ENCODE measurements at regions of chr6 and their contacts with region 1.

Region 1: DNA sequence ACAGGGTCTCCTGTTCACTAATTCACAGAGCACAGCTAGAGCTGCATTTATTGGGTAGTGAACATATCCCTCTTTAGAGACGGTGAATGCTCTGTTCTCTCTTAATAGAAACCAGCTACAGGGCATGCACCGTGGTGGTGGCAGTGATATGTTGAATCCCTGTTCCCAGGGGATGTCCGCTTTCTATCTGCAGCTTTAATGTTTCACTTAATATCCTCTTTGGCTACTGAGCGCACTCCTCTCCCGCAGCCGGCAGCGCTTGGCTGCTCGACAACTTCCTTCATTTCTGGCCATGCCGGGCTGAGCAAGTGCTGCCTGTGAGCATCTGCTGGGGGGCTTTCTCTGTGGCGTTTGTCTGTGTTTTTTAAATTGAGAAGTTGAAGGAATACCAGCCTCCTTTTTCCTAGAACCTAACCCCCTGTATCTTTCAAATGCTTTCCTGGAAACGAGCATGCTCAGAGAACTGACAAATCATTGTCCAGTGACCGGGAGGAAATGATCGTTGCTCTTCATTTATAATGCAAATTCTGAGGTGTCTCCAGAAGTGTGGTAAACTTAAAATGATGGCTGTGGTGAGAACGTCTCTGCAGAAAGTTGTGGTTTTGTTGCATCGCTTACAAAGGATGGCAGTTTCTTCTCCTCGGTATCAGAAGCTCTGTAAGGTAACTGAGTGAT is 297.9 kb downstream of the UTRN start:
- DNase-seq: peak; percentile 83
- ATAC-seq: peak; percentile 90
- H3K4me3 ChIP-seq: peak overlapping the region; percentile 16; the same call in 1 of the 2 replicates
- H3K27ac ChIP-seq: no peak overlapping the region
- H3K4me1 ChIP-seq: peaks cover 21% of the 10 kb centered on the region; the same call in 1 of the 2 replicates
- H3K27me3 ChIP-seq: no peaks in the 10 kb centered on the region
- CTCF ChIP-seq: no peak
- EP300 ChIP-seq: peak in 1 of 2 experiments; percentile 63; a peak in 1 of 4 replicates
- POLR2A ChIP-seq: no peak
- RAD21 ChIP-seq: no peak

Region 2: DNA sequence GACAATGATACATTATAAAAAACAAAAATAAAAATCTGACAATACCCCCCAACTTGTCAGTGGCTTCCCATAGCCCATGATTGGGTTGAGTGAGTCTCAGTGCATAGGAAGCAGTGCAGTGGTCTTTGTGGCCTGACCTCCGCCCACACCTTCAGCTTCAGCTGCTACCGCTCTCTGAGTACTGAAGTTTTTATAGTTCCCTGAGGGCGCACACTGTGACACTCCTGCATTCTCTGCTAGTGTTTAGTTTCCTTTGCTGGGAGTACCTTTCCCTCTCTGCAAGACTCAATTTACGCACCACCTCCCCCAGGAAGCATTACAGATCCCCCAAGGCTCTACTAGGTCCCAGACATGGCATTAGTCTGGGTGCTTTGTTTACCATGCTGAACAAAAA is 143.1 kb after region 1 on chr6:
- CTCF ChIA-PET with region 1: interaction called, 4 read pairs
- POLR2A ChIA-PET with region 1: no interaction called
- RAD21 ChIA-PET with region 1: interaction called, 5 read pairs
- SMC1A ChIA-PET with region 1: no interaction called
- in situ Hi-C with region 1: no loop called
- intact Hi-C with region 1: loop called (anchors 10 kb)
- DNase-seq: no peak
- ATAC-seq: peak; percentile 77
- H3K4me3 ChIP-seq: no peak overlapping the region
- H3K27ac ChIP-seq: no peak overlapping the region
- H3K4me1 ChIP-seq: peaks cover 20% of the 10 kb centered on the region; the same call in 1 of the 2 replicates
- H3K27me3 ChIP-seq: no peaks in the 10 kb centered on the region
- CTCF ChIP-seq: no peak
- EP300 ChIP-seq: peak in 1 of 2 experiments; percentile 19; a peak in 1 of 4 replicates
- POLR2A ChIP-seq: no peak
- RAD21 ChIP-seq: no peak

Region 3: DNA sequence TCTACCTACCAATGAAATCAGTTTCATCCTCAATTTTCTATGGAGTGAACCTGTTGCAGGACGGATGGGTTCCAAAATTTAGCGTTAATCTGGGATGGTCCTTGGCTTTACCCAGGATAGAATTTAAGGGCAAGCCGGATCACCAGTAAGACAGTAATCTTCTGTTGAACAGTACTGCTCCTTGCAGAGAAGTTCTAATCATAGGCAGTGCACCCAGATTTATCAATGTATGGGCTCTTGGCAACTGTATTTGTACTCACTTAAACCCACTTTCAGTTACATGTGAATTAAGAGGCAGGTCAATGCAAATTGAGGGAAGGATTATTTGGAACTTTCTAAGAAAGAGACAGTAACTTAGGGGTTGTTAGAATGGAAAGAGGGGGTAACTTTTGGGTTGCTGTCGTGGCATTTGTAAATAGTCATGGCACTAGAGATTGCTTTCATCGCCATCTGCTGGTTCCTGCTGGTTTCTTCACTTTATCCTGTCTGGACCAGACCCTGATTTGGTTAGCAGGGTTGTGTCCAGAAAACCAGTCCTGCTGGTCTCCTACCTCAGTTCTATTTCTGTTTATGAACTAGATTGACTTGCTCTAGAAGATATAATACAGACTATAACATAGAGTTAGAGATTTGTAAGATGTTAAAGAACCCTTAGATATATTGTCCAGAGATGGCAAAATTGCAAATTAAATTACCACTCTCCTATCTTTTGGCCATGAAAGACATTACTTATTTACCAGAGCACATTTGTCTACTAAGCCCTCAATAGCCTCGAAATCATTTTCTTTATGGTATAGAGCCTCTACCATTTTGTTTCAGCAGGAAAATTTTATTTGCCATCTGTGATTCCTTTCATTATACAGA is 348.3 kb after region 1 on chr6:
- CTCF ChIA-PET with region 1: interaction called, 5 read pairs
- POLR2A ChIA-PET with region 1: no interaction called
- RAD21 ChIA-PET with region 1: interaction called, 3 read pairs
- SMC1A ChIA-PET with region 1: interaction called, 7 read pairs
- in situ Hi-C with region 1: loop called (anchors 5 kb)
- intact Hi-C with region 1: loop called (anchors 1 kb)
- DNase-seq: no peak
- ATAC-seq: peak; percentile 78
- H3K4me3 ChIP-seq: no peak overlapping the region
- H3K27ac ChIP-seq: no peak overlapping the region
- H3K4me1 ChIP-seq: no peaks in the 10 kb centered on the region
- H3K27me3 ChIP-seq: no peaks in the 10 kb centered on the region; a peak in 1 of 4 replicates
- CTCF ChIP-seq: peak; percentile 49 to 57 (median 53); a peak in 5 of 6 replicates
- EP300 ChIP-seq: no peak
- POLR2A ChIP-seq: no peak
- RAD21 ChIP-seq: peak; percentile 56

Region 4: GRCh38 chr6:145028144-145028818 is 445.2 kb after region 1 on chr6:
- CTCF ChIA-PET with region 1: interaction called, 7 read pairs
- POLR2A ChIA-PET with region 1: no interaction called
- RAD21 ChIA-PET with region 1: interaction called, 3 read pairs
- SMC1A ChIA-PET with region 1: interaction called, 4 read pairs
- in situ Hi-C with region 1: loop called (anchors 10 kb)
- intact Hi-C with region 1: loop called (anchors 1 kb)
- DNase-seq: no peak
- ATAC-seq: peak; percentile 84
- H3K4me3 ChIP-seq: no peak overlapping the region
- H3K27ac ChIP-seq: no peak overlapping the region
- H3K4me1 ChIP-seq: no peaks in the 10 kb centered on the region
- H3K27me3 ChIP-seq: no peaks in the 10 kb centered on the region; a peak in 1 of 4 replicates
- CTCF ChIP-seq: peak; percentile 35 to 59 (median 54); a peak in 4 of 6 replicates
- EP300 ChIP-seq: no peak
- POLR2A ChIP-seq: no peak
- RAD21 ChIP-seq: peak; percentile 60

Region 5: GRCh38 chr6:145086197-145086596 is 503.1 kb after region 1 on chr6:
- CTCF ChIA-PET with region 1: no interaction called
- POLR2A ChIA-PET with region 1: no interaction called
- RAD21 ChIA-PET with region 1: no interaction called
- SMC1A ChIA-PET with region 1: no interaction called
- in situ Hi-C with region 1: no loop called
- intact Hi-C with region 1: no loop called
- DNase-seq: no peak
- ATAC-seq: peak; percentile 34; the same call in 2 of the 3 replicates
- H3K4me3 ChIP-seq: no peak overlapping the region
- H3K27ac ChIP-seq: no peak overlapping the region
- H3K4me1 ChIP-seq: no peaks in the 10 kb centered on the region
- H3K27me3 ChIP-seq: no peaks in the 10 kb centered on the region
- CTCF ChIP-seq: no peak
- EP300 ChIP-seq: no peak
- POLR2A ChIP-seq: no peak
- RAD21 ChIP-seq: no peak

Region 6: GRCh38 chr6:145214570-145214969 is 631.5 kb after region 1 on chr6:
- CTCF ChIA-PET with region 1: interaction called, 8 read pairs
- POLR2A ChIA-PET with region 1: no interaction called
- RAD21 ChIA-PET with region 1: interaction called, 3 read pairs
- SMC1A ChIA-PET with region 1: interaction called, 3 read pairs
- in situ Hi-C with region 1: loop called (anchors 5 kb)
- intact Hi-C with region 1: loop called (anchors 2 kb)
- DNase-seq: no peak
- ATAC-seq: peak; percentile 55
- H3K4me3 ChIP-seq: no peak overlapping the region
- H3K27ac ChIP-seq: no peak overlapping the region
- H3K4me1 ChIP-seq: peaks cover 15% of the 10 kb centered on the region
- H3K27me3 ChIP-seq: no peaks in the 10 kb centered on the region
- CTCF ChIP-seq: peak; percentile 32 to 43 (median 37); a peak in 4 of 6 replicates
- EP300 ChIP-seq: no peak
- POLR2A ChIP-seq: no peak
- RAD21 ChIP-seq: peak; percentile 72

Region 7: GRCh38 chr6:145704143-145704781 is 1121.2 kb after region 1 on chr6:
- CTCF ChIA-PET with region 1: no interaction called
- POLR2A ChIA-PET with region 1: no interaction called
- RAD21 ChIA-PET with region 1: no interaction called
- SMC1A ChIA-PET with region 1: no interaction called
- in situ Hi-C with region 1: no loop called
- intact Hi-C with region 1: loop called (anchors 10 kb)
- DNase-seq: no peak
- ATAC-seq: no peak
- H3K4me3 ChIP-seq: no peak overlapping the region
- H3K27ac ChIP-seq: no peak overlapping the region
- H3K4me1 ChIP-seq: no peaks in the 10 kb centered on the region
- H3K27me3 ChIP-seq: no peaks in the 10 kb centered on the region
- CTCF ChIP-seq: peak in 2 of 3 experiments; percentile 19 to 24; a peak in 3 of 6 replicates
- EP300 ChIP-seq: no peak
- POLR2A ChIP-seq: no peak
- RAD21 ChIP-seq: peak; percentile 14; the same call in 1 of the 2 replicates

Measured in GM12878 (cell line).